CD4-positive, alpha-beta memory T cell (primary cell): ENCODE measurements at regions of chr2 and their contacts with region 1.

Region 1: DNA sequence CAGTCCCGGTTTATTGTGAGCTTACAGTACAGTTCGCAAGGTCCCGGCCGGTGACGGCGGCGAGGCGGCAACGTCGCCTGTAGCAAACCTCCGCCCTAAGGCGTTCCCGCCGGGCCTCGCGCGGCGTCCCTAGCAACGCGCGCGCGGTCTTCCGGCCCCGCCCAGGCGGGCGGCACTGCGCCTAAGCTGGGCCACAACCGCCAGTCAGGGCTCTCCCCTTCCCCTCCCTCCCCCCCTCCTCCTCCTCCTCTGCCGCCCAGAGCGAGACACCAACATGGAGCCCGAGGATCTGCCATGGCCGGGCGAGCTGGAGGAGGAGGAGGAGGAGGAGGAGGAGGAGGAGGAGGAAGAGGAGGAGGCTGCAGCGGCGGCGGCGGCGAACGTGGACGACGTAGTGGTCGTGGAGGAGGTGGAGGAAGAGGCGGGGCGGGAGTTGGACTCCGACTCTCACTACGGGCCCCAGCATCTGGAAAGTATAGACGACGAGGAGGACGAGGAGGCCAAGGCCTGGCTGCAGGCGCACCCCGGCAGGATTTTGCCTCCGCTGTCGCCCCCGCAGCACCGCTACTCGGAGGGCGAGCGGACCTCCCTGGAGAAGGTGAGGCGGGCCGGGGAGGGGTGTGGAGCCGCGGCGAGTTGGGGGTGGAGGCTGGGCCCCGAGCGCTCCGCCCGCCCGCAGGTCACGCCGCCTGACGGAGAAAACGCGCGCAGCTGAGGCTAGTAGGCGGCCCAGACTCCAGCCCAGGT is at the start of gene ALMS1:
- DNase-seq: peak; percentile 86 to 91 (median 91)
- H3K4me3 ChIP-seq: peak within 1 kb of the TSS; percentile 62 to 79
- H3K4me3 Mint-ChIP-seq: peak within 1 kb of the TSS; percentile 91 to 93 (median 92)
- H3K27ac ChIP-seq: peak within 1 kb of the TSS; percentile 77
- H3K27ac Mint-ChIP-seq: peak within 1 kb of the TSS; percentile 96 to 99 (median 98)
- H3K4me1 ChIP-seq: peaks cover 25% of the 10 kb centered on the region
- H3K4me1 Mint-ChIP-seq: peaks cover 28 to 43% (median 34%) of the 10 kb centered on the region in 4 donors
- H3K27me3 ChIP-seq: no peaks in the 10 kb centered on the region
- H3K27me3 Mint-ChIP-seq: peaks cover 0 to 3% of the 10 kb centered on the region in 2 donors
- total RNA-seq, gene ALMS1: 35.5 to 42.9 TPM

Region 2: GRCh38 chr2:73293534-73294171 is 92.1 kb before region 1 on chr2 and contains the start of gene EGR4:
- CTCF ChIA-PET with region 1: interaction called, 6 read pairs
- POLR2A ChIA-PET with region 1: interaction called, 6 read pairs
- intact Hi-C with region 1: loop called (anchors 1 kb)
- DNase-seq: peak; percentile 90 to 97 (median 92)
- H3K4me3 ChIP-seq: peak within 1 kb of the TSS; percentile 55 to 71
- H3K4me3 Mint-ChIP-seq: peak within 1 kb of the TSS; percentile 64 to 87 (median 78)
- H3K27ac ChIP-seq: no peak within 1 kb of the TSS
- H3K27ac Mint-ChIP-seq: peak within 1 kb of the TSS in 4 of 7 donors; percentile 69 to 77 (median 72)
- H3K4me1 ChIP-seq: peaks cover 28% of the 10 kb centered on the region
- H3K4me1 Mint-ChIP-seq: peaks cover 6 to 22% (median 15%) of the 10 kb centered on the region in 4 donors
- H3K27me3 ChIP-seq: peaks cover 30% of the 10 kb centered on the region
- H3K27me3 Mint-ChIP-seq: peaks cover 37 to 42% of the 10 kb centered on the region in 2 donors
- total RNA-seq, gene EGR4: not detected

Region 3: DNA sequence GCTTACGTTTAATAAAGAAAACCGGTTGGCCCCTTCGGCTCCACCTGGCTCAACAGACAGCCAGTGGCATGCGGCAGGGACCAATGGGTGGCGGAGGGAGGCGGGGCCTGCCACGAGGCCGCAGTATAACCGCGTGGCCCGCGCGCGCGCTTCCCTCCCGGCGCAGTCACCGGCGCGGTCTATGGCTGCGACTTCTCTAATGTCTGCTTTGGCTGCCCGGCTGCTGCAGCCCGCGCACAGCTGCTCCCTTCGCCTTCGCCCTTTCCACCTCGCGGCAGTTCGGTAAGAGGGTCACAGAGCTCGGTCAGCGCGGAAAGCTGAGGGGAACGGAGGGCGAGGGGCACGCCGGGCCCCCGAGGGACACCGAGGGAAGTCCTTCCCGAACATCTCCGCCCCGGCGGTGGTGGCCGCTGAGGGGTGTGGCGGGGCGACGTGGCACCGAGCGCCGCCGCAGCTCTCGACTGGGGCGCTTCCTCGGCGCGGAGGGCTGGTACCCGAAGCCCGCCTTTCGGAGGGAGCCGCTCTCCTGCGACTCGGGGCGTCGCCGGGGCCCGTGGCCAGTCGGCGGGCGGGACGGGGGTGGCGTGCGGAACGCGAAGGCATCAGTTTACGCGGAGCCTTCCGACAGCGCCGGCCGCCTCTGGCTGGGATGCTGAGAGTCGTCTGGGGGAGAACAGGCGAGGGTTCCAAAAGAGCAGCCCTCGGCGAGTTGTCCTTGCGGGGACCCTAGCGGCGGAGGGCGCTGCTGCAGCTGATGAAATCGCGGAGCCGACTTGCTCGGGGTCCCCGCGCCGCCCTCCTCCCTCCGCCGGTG is 812.9 kb after region 1 on chr2 and contains the start of gene MTHFD2:
- CTCF ChIA-PET with region 1: no interaction called
- POLR2A ChIA-PET with region 1: no interaction called
- intact Hi-C with region 1: loop called (anchors 5 kb)
- DNase-seq: peak; percentile 84 to 89 (median 86)
- H3K4me3 ChIP-seq: peak within 1 kb of the TSS; percentile 85 to 91
- H3K4me3 Mint-ChIP-seq: peak within 1 kb of the TSS; percentile 94 to 100 (median 98)
- H3K27ac ChIP-seq: peak within 1 kb of the TSS; percentile 86
- H3K27ac Mint-ChIP-seq: peak within 1 kb of the TSS; percentile 89 to 100 (median 99)
- H3K4me1 ChIP-seq: peaks cover 35% of the 10 kb centered on the region
- H3K4me1 Mint-ChIP-seq: peaks cover 20 to 41% (median 31%) of the 10 kb centered on the region in 4 donors
- H3K27me3 ChIP-seq: no peaks in the 10 kb centered on the region
- H3K27me3 Mint-ChIP-seq: no peaks in the 10 kb centered on the region
- total RNA-seq, gene MTHFD2: 23.8 to 25.0 TPM

Region 4: GRCh38 chr2:74958274-74959105 is 1572.7 kb after region 1 on chr2 and contains the start of gene POLE4:
- CTCF ChIA-PET with region 1: no interaction called
- POLR2A ChIA-PET with region 1: no interaction called
- intact Hi-C with region 1: loop called (anchors 2 kb)
- DNase-seq: peak; percentile 93 to 94 (median 94)
- H3K4me3 ChIP-seq: peak within 1 kb of the TSS; percentile 72 to 79
- H3K4me3 Mint-ChIP-seq: peak within 1 kb of the TSS; percentile 83 to 91 (median 86)
- H3K27ac ChIP-seq: peak within 1 kb of the TSS; percentile 74
- H3K27ac Mint-ChIP-seq: peak within 1 kb of the TSS; percentile 85 to 95 (median 92)
- H3K4me1 ChIP-seq: peaks cover 33% of the 10 kb centered on the region
- H3K4me1 Mint-ChIP-seq: peaks cover 33 to 62% (median 49%) of the 10 kb centered on the region in 4 donors
- H3K27me3 ChIP-seq: no peaks in the 10 kb centered on the region
- H3K27me3 Mint-ChIP-seq: no peaks in the 10 kb centered on the region
- total RNA-seq, gene POLE4: 46.1 to 49.0 TPM